ENCODE measurements at regions of chr14 and their contacts with region 1.

Region 1: DNA sequence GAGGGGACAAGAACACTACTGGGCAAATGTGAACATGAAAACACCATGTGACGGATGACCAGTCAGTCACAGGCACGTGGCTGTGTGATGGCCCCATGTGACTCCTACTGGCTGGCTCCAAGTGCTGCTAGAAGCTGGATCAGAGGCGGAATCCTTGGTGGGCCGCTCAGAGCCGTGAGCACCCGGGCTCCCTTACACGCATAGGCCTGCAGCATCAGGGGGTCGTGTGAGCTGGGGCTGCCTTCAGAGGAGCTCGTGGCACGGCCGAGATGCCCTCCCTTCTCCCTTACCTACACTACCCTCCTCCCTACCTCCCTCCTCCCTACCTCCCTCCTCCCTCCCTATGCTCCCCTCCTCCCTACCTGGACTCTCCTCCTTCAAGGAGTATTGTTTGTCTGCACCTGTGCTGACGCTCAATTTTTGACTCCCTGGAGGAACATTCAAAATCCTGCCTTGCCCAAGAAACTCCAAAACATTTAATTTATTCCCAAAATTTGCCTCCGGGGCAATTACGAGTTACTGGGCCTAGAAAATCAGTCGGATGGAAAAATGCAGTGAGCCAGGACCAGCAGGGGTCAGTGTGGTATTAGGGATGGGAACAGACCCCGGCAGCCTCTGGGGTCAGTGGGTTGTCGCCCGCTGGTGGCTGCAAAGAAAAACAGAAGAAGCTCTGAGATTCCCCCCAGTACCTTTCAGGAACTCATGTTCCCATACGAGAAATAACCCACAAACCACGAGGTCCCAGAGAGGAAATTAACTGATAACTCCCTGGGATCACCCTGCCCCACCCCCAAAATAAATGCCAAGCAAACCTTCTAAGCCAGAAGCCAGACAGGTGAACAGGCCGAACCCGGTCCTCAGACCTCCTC is 61.2 kb downstream of the C14orf132 start:
- DNase-seq: no peak

Region 2: GRCh38 chr14:96001866-96002497 is 98.4 kb before region 1 on chr14:
- intact Hi-C with region 1: loop called (anchors 2 kb)
- DNase-seq: no peak

Region 3: GRCh38 chr14:96424109-96424989 is 324.0 kb after region 1 on chr14:
- intact Hi-C with region 1: loop called (anchors 5 kb)
- DNase-seq: no peak